AG04450 (cell line): ENCODE measurements at regions of chr7 and their contacts with region 1.

Region 1: DNA sequence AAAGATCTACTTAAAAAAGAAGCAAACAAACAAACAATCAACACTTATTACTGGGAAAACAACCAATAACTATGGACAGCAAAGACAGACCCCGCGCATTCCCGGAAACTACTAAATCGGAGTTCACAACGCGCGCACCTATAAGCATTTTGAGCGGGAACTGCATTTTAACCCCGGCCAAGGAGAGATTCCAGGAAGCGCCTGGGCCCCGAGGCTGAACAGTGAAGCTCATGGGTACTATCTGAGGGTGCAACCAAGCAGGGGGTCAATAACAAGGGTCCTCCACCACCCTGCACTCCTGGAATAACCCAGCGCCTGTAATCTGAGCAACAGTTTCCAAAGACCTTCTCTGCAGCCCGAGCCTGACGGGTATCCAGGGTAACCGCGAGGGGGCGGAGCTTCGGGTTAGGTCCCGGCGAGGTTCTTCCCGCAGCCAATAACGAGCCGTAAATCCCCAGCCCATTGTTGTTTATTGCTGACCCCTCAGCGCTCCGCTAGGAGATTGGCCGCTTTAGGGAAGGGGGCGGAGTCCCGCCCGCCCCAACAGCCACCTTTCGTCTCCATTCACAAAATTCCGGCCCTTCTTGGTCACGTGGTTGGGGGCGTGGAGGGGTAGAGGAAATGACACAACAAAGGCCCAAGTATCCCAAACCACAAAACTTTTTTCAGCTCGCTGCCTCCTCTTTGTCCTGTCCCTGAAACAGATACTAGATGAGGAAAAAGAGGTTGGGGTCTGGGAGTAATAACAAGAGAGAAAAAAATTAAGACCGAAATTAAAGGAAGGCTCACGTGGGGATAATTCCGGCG is 1.7 kb upstream of the ETV1 start:
- DNase-seq: peak; percentile 95
- H3K4me3 ChIP-seq: peak overlapping the region; percentile 81
- H3K27ac ChIP-seq: peak overlapping the region; percentile 94
- H3K27me3 ChIP-seq: no peaks in the 10 kb centered on the region
- CTCF ChIP-seq: no peak

Region 2: DNA sequence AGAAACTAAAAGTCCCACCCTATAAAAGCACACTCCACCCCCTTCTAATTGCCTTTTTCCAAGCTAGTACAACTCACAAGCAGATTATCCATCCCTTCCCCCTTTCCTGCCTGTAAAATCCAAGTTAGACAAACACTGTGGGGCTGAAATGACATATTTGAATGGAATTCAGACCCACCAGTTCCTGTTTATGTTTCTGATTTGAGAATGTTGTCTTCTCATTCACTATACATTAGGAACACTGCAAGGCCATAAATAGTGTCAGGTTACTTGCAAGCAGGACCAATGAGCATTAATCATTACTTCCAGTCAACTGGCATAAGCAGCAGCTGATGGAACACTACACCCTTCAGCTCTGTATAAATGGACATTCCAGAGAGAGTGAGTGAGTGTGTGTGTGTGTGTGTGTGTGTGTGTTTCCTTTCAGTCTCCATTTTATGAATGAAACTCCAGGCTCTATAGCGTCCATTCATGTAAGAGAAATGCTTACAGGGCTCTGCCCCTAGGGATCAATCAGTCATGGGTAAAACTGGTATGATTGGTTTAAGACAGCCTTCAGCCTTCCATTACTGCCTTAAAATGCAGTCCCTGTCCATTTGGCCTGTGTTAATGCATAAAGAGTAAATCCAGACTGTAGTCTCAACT is 71.0 kb before region 1 on chr7:
- CTCF ChIA-PET with region 1: interaction called, 3 read pairs
- POLR2A ChIA-PET with region 1: interaction called, 11 read pairs
- DNase-seq: peak; percentile 100
- H3K4me3 ChIP-seq: peak overlapping the region; percentile 27
- H3K27ac ChIP-seq: peak overlapping the region; percentile 49
- H3K27me3 ChIP-seq: no peaks in the 10 kb centered on the region
- CTCF ChIP-seq: no peak

Region 3: DNA sequence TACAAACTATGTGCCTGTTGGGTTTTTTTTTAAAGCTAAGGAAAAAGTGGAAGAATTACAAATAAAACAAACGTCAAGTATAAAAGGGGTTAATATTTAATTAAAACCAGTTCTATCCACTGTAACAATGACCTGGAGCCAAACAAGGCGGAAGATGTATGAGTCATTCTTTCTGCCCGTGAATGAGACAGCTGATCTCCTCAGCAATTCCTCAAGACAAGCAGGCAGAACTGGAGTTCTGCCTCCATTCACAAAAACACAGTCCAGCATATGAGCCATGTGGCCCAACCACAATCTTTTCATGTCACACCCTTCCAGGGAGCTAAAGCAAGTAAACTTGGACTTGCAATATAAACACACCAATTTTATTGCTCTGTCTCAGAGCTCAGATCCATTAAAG is 10.1 kb before region 1 on chr7:
- CTCF ChIA-PET with region 1: interaction called, 15 read pairs
- POLR2A ChIA-PET with region 1: interaction called, 24 read pairs
- DNase-seq: peak; percentile 94
- H3K4me3 ChIP-seq: no peak overlapping the region; the same call in 1 of the 2 replicates
- H3K27ac ChIP-seq: no peak overlapping the region
- H3K27me3 ChIP-seq: no peaks in the 10 kb centered on the region
- CTCF ChIP-seq: no peak

Region 4: GRCh38 chr7:14457568-14458453 is 466.6 kb after region 1 on chr7:
- CTCF ChIA-PET with region 1: interaction called, 14 read pairs
- POLR2A ChIA-PET with region 1: no interaction called
- DNase-seq: peak; percentile 70
- H3K4me3 ChIP-seq: no peak overlapping the region
- H3K27ac ChIP-seq: no peak overlapping the region
- H3K27me3 ChIP-seq: no peaks in the 10 kb centered on the region
- CTCF ChIP-seq: peak; percentile 92

Region 5: GRCh38 chr7:14717816-14718215 is 726.6 kb after region 1 on chr7:
- CTCF ChIA-PET with region 1: no interaction called
- POLR2A ChIA-PET with region 1: no interaction called
- DNase-seq: no peak
- H3K4me3 ChIP-seq: no peak overlapping the region
- H3K27ac ChIP-seq: no peak overlapping the region
- H3K27me3 ChIP-seq: no peaks in the 10 kb centered on the region
- CTCF ChIP-seq: peak; percentile 63